Activated B cell treated with CpG ODN at 0.5 μM for 24 hours (primary cell): ENCODE measurements at regions of chr6 and their contacts with region 1.

Region 1: GRCh38 chr6:132147530-132148011 is 196.4 kb upstream of the CCN2 start:
- DNase-seq: no peak
- ATAC-seq: no peak
- H3K4me3 Mint-ChIP-seq: no peak overlapping the region
- H3K27ac Mint-ChIP-seq: no peak overlapping the region
- H3K4me1 Mint-ChIP-seq: peaks cover 27% of the 10 kb centered on the region
- H3K27me3 Mint-ChIP-seq: no peaks in the 10 kb centered on the region
- CTCF ChIP-seq: no peak

Region 2: DNA sequence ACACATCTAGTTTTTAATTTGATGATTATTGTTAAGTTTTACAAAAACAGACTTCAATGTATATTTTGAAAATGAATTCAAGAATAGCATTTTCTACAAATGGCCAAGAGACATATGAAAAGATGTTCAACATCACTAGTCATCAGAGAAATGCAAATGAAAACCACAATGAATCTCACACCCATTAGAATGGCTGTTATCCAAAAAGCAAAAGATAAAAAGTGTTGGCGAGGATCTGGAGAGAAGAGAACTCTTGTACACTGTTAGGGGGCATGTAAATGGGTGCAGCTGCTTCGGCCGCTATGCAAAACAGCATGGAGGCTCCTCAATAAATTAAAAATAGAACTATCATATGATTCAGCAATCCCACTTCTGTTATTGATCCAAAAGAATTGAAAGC is 10.6 kb before region 1 on chr6:
- CTCF ChIA-PET with region 1: no interaction called
- POLR2A ChIA-PET with region 1: interaction called, 6 read pairs
- intact Hi-C with region 1: loop called (anchors 1 kb)
- DNase-seq: no peak
- ATAC-seq: no peak
- H3K4me3 Mint-ChIP-seq: peak overlapping the region; percentile 53
- H3K27ac Mint-ChIP-seq: peak overlapping the region; percentile 83
- H3K4me1 Mint-ChIP-seq: peaks cover 86% of the 10 kb centered on the region
- H3K27me3 Mint-ChIP-seq: no peaks in the 10 kb centered on the region
- CTCF ChIP-seq: no peak

Region 3: GRCh38 chr6:132190815-132191175 is 43.2 kb after region 1 on chr6:
- CTCF ChIA-PET with region 1: no interaction called
- POLR2A ChIA-PET with region 1: no interaction called
- intact Hi-C with region 1: no loop called
- DNase-seq: no peak
- ATAC-seq: no peak
- H3K4me3 Mint-ChIP-seq: no peak overlapping the region
- H3K27ac Mint-ChIP-seq: no peak overlapping the region
- H3K4me1 Mint-ChIP-seq: peaks cover 4% of the 10 kb centered on the region
- H3K27me3 Mint-ChIP-seq: no peaks in the 10 kb centered on the region
- CTCF ChIP-seq: no peak

Region 4: DNA sequence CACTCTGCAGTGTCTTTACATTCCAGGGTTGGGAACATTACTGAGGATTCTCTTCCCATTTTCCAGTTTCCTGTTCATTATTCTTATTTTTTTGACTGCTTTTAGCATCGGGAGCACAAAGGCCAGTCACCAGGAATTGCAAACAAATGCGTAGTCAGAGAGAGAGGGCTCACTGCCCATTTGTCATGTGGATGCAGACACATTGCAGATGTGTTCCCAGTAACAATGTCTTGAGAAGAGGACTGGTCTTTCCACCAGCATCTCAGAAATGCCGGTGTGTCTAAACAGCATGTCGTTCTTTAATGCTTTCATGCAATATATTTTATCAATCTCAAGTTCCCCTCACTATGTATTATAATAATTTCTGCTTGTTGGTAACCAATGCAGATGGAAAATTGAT is 421.6 kb after region 1 on chr6:
- CTCF ChIA-PET with region 1: no interaction called
- POLR2A ChIA-PET with region 1: no interaction called
- intact Hi-C with region 1: no loop called
- DNase-seq: no peak
- ATAC-seq: no peak
- H3K4me3 Mint-ChIP-seq: no peak overlapping the region
- H3K27ac Mint-ChIP-seq: no peak overlapping the region
- H3K4me1 Mint-ChIP-seq: no peaks in the 10 kb centered on the region
- H3K27me3 Mint-ChIP-seq: peaks cover 24% of the 10 kb centered on the region
- CTCF ChIP-seq: no peak